ENCODE measurements at regions of chr2 and their contacts with region 1.

Region 1: DNA sequence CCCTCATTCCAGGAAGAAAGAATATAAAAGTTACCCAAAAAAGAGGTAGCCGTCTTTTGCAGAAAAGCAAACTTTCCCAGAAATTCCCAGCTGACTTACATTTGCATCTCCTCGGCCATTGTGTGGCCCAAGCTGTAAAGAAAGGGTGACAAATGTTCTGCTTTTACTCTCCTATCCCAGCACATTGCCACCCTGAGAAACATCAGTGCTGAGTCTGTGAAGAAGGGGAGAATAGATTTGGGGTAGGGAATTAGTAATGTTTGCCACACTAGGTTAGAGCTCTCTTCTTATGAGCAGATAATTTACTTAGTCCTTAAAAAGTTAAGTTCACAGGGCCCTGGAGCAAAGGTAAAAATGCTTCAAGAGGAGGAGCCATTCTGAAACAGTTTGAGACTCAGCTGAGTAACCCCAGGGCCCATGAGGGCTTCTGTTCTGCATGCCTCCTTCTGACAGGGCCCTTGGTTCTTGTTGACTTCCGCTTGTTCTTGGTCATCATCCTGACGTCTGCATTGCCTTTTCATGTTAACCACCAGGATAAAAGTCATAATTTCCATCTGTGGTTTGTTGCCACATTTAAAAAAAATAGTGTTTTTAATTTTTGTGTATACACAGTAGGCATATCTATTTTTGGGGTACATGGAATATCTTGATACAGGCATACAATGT is 550.7 kb downstream of the RNF144A start:
- DNase-seq: no peak
- ATAC-seq: peak; percentile 97
- H3K4me3 Mint-ChIP-seq: peak overlapping the region; percentile 25
- H3K27ac Mint-ChIP-seq: peak overlapping the region; percentile 87
- H3K4me1 Mint-ChIP-seq: peaks cover 38% of the 10 kb centered on the region
- H3K27me3 Mint-ChIP-seq: no peaks in the 10 kb centered on the region

Region 2: DNA sequence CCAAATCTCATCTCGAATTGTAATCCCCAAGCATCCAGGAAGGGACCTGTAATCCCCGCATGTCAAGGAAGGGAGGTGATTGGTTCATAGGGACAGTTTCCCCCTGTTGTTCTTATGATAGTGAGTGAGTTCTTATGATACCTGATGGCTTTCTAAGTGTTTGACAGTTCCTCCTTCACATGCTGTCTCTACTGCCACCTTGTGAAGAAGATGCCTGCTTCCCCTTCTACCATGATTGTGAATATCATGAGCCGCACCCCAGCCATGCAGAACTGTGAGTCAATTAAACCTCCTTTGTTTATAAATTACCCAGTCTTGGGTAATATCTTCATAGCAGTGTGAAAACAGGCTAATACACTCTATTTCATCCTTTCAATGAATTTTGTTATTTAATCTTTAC is 104.0 kb before region 1 on chr2:
- POLR2A ChIA-PET with region 1: no interaction called
- DNase-seq: no peak
- ATAC-seq: no peak
- H3K4me3 Mint-ChIP-seq: no peak overlapping the region
- H3K27ac Mint-ChIP-seq: no peak overlapping the region
- H3K4me1 Mint-ChIP-seq: no peaks in the 10 kb centered on the region
- H3K27me3 Mint-ChIP-seq: peaks cover 8% of the 10 kb centered on the region

Region 3: DNA sequence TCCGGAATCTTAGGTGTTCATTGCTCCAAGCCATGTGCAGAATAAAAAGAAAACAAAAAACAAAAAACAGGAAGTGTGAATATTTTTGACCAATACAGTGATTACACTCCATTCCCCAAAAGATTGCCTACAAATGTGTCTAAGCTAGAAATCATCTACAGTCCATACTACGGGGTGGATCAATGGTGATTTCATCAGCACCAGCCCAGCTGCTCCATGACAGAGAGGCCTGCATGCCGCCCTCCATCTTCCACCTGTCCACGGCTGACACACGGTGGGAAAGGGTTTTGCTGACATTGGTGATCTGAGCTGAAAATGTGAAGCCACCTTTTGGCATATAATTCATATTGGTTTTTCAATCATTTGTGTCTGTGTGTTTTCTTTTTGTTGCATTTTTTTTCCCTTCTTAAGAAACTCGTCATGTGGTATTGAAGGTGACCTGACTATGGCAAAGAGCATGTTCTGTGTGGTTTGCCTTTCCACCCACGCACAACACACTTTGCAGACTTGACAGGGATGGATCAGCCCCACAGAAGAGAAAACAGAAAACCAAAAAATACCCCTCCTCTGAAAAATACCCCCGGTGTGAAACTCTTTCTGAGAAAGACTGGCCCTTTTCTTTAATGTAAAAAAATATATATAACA is 17.6 kb before region 1 on chr2:
- POLR2A ChIA-PET with region 1: interaction called, 10 read pairs
- DNase-seq: no peak
- ATAC-seq: peak; percentile 45
- H3K4me3 Mint-ChIP-seq: peak overlapping the region; percentile 73
- H3K27ac Mint-ChIP-seq: peak overlapping the region; percentile 92
- H3K4me1 Mint-ChIP-seq: peaks cover 70% of the 10 kb centered on the region
- H3K27me3 Mint-ChIP-seq: no peaks in the 10 kb centered on the region

Region 4: DNA sequence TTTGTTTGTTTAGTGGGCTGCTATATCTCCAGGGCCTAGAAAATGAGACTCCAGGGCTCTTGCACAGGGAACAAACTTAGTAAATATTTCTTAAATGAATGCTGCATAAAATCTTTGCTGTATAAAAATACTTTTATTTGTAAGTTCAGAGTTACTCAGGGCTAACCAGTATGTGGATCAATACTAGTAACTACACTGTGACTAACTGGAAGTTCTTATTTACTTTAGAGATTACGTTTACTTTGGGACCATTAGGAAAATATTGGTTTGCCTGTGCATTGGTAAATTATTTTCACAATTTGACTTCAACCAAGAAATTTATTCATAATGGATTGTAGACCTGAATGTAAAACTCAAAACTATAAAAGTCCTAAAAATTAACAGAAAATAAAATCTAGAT is 24.8 kb after region 1 on chr2:
- POLR2A ChIA-PET with region 1: no interaction called
- DNase-seq: no peak
- ATAC-seq: no peak
- H3K4me3 Mint-ChIP-seq: no peak overlapping the region
- H3K27ac Mint-ChIP-seq: no peak overlapping the region
- H3K4me1 Mint-ChIP-seq: peaks cover 11% of the 10 kb centered on the region
- H3K27me3 Mint-ChIP-seq: no peaks in the 10 kb centered on the region

Measured in activated naive CD8-positive, alpha-beta T cell treated with anti-CD3 and anti-CD28 coated beads, Interleukin-2, amount 10 ng/mL, durations not matched to agents 7 days and 5 days (primary cell).